Dendritic cell treated with granulocyte-macrophage colony-stimulating factor and Interleukin-4, amounts not matched to agents 40 ng/mL and 50 ng/mL, for 4 days (primary cell): ENCODE measurements at regions of chr1 and their contacts with region 1.

Region 1: DNA sequence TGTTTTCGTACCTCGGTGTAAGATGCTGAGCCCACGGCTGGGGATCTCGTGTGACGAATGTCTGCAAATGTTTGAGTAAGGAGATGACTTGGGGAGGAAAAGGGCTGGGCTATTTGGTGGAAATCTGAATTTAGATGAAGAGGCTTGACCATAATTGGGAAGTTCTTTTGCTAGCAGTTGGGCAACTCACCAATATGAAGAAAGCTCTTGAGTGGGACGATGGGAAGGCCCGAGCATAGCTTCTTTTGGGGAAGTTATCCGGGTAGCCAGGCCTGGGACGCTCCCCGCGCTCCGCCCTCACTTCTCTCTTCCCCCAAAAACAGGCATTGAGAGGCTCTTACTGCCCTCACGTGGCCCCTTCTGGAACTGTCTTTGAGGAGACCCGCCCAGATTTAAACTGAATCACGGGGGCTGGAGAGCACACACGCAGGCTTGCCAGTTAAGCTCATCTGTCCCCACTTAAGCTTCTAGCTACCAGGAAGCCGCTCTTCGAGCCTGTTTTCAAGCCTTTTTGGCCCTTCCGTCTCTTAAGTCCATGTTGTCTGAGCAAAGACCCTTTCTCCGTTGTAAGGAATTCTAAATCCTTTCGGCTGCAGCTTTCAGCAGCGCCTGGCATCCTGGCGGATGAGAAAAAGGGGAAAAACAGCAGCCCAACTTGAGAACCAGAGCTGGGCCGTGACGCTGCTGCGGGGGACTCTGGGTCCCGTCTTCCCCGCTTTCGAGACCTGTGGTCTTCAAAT is 93.1 kb downstream of the NID1 start:
- H3K4me3 Mint-ChIP-seq: peak overlapping the region; percentile 71
- H3K27ac Mint-ChIP-seq: peak overlapping the region; percentile 99
- H3K4me1 Mint-ChIP-seq: peaks cover 32% of the 10 kb centered on the region
- H3K27me3 Mint-ChIP-seq: no peaks in the 10 kb centered on the region

Region 2: GRCh38 chr1:235504496-235505222 is 467.1 kb before region 1 on chr1:
- intact Hi-C with region 1: loop called (anchors 5 kb)
- H3K4me3 Mint-ChIP-seq: peak overlapping the region; percentile 95
- H3K27ac Mint-ChIP-seq: peak overlapping the region; percentile 99
- H3K4me1 Mint-ChIP-seq: peaks cover 15% of the 10 kb centered on the region
- H3K27me3 Mint-ChIP-seq: peaks cover 3% of the 10 kb centered on the region

Region 3: GRCh38 chr1:235831148-235831547 is 140.6 kb before region 1 on chr1:
- intact Hi-C with region 1: loop called (anchors 10 kb)
- H3K4me3 Mint-ChIP-seq: peak overlapping the region; percentile 27
- H3K27ac Mint-ChIP-seq: peak overlapping the region; percentile 61
- H3K4me1 Mint-ChIP-seq: peaks cover 19% of the 10 kb centered on the region
- H3K27me3 Mint-ChIP-seq: no peaks in the 10 kb centered on the region

Region 4: GRCh38 chr1:235866913-235867845 is 104.6 kb before region 1 on chr1:
- intact Hi-C with region 1: loop called (anchors 1 kb)
- H3K4me3 Mint-ChIP-seq: peak overlapping the region; percentile 94
- H3K27ac Mint-ChIP-seq: peak overlapping the region; percentile 96
- H3K4me1 Mint-ChIP-seq: peaks cover 47% of the 10 kb centered on the region
- H3K27me3 Mint-ChIP-seq: no peaks in the 10 kb centered on the region

Region 5: DNA sequence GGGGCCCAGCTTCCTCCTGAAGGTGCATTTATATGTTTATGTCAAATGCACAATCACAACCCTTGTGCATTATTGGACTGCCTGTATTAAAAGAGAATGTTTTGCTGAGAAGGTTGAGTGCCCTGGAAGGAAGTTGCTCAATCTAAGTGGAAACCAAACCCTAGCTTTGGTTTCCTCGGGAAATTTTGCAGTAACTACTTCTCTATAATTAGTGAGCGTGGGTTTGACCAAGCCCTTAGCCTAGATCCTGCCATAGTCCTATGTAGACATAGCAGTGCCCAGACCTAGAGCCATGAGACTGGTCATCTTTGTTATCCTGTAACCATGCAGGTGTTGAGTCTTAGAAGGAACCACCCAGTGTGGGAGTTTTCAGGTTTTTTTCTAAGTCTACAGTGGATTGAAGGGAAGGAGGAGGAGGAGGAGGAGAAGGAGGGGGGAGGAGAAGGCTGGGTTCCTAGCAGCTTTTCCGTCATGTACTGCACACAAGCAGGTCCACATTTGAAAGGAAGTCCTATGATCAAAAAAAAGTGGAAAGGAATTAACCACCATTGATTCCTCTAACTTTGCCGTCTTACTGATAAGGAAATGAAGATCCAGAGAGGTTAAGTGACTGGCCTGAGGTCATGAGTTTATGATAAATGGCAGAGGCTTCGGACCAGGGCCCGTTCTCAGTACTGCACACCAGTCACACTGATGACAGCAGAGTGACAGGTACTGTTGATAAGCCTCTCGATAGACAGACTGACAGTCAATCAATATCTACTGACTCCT is 32.8 kb before region 1 on chr1:
- intact Hi-C with region 1: loop called (anchors 5 kb)
- H3K4me3 Mint-ChIP-seq: peak overlapping the region; percentile 13
- H3K27ac Mint-ChIP-seq: peak overlapping the region; percentile 77
- H3K4me1 Mint-ChIP-seq: peaks cover 92% of the 10 kb centered on the region
- H3K27me3 Mint-ChIP-seq: peaks cover 13% of the 10 kb centered on the region